Esophagus muscularis mucosa (tissue), 4 donors: ENCODE measurements at regions of chr7 and their contacts with region 1.

Region 1: GRCh38 chr7:107982918-107983389 is 20.0 kb downstream of the LAMB1 start:
- DNase-seq: no peak
- H3K4me3 ChIP-seq: no peak overlapping the region
- H3K27ac ChIP-seq: peak overlapping the region; percentile 58 to 73 (median 68)
- H3K4me1 ChIP-seq: peaks cover 10 to 70% (median 59%) of the 10 kb centered on the region in 4 donors
- H3K27me3 ChIP-seq: no peaks in the 10 kb centered on the region
- CTCF ChIP-seq: peak; percentile 9 to 61 (median 23)
- EP300 ChIP-seq: no peak
- POLR2A ChIP-seq: no peak

Region 2: GRCh38 chr7:107917763-107918651 is 64.9 kb before region 1 on chr7:
- intact Hi-C with region 1: loop called (anchors 5 kb)
- DNase-seq: no peak
- H3K4me3 ChIP-seq: no peak overlapping the region
- H3K27ac ChIP-seq: peak overlapping the region in 2 of 4 donors; percentile 37 to 41
- H3K4me1 ChIP-seq: peaks cover 0 to 40% (median 20%) of the 10 kb centered on the region in 4 donors
- H3K27me3 ChIP-seq: no peaks in the 10 kb centered on the region
- CTCF ChIP-seq: no peak
- EP300 ChIP-seq: no peak
- POLR2A ChIP-seq: no peak

Region 3: GRCh38 chr7:108002726-108003598 is 20.0 kb after region 1 on chr7 and contains the start of gene LAMB1:
- intact Hi-C with region 1: no loop called
- DNase-seq: no peak
- H3K4me3 ChIP-seq: peak within 1 kb of the TSS; percentile 80 to 86 (median 84)
- H3K27ac ChIP-seq: peak within 1 kb of the TSS; percentile 84 to 90 (median 89)
- H3K4me1 ChIP-seq: peaks cover 22 to 59% (median 53%) of the 10 kb centered on the region in 4 donors
- H3K27me3 ChIP-seq: no peaks in the 10 kb centered on the region
- CTCF ChIP-seq: no peak
- EP300 ChIP-seq: no peak
- POLR2A ChIP-seq: peak; percentile 78
- total RNA-seq, gene LAMB1: 167 to 240 (median 219) TPM